Heart right ventricle (tissue), 16 donors: ENCODE measurements at regions of chr4 and their contacts with region 1.

Region 1: GRCh38 chr4:73258686-73259570 is at the start of gene ANKRD17:
- DNase-seq: peak; percentile 90 to 93
- ATAC-seq: peak; percentile 91 to 96 (median 93)
- H3K4me3 ChIP-seq: peak within 1 kb of the TSS; percentile 68 to 96 (median 82)
- H3K27ac ChIP-seq: peak within 1 kb of the TSS; percentile 93 to 100 (median 98)
- H3K4me1 ChIP-seq: peaks cover 0 to 65% (median 50%) of the 10 kb centered on the region in 9 donors
- H3K27me3 ChIP-seq: no peaks in the 10 kb centered on the region
- CTCF ChIP-seq: peak in 5 of 9 donors; percentile 18 to 30 (median 27)
- total RNA-seq, gene ANKRD17: 47.4 to 71.7 (median 63.7) TPM

Region 2: GRCh38 chr4:73055241-73055897 is 203.6 kb before region 1 on chr4:
- intact Hi-C with region 1: loop called in 1 of 10 experiments (anchors 10 kb)
- DNase-seq: no peak
- ATAC-seq: no peak
- H3K4me3 ChIP-seq: no peak overlapping the region
- H3K27ac ChIP-seq: no peak overlapping the region
- H3K4me1 ChIP-seq: peaks cover 0 to 6% (median 0%) of the 10 kb centered on the region in 9 donors
- H3K27me3 ChIP-seq: no peaks in the 10 kb centered on the region
- CTCF ChIP-seq: no peak

Region 3: GRCh38 chr4:73075832-73076231 is 183.1 kb before region 1 on chr4:
- intact Hi-C with region 1: loop called in 2 of 10 experiments (anchors 2 to 5 kb)
- DNase-seq: no peak
- ATAC-seq: no peak
- H3K4me3 ChIP-seq: no peak overlapping the region
- H3K27ac ChIP-seq: no peak overlapping the region
- H3K4me1 ChIP-seq: peaks cover 0 to 7% (median 0%) of the 10 kb centered on the region in 9 donors
- H3K27me3 ChIP-seq: no peaks in the 10 kb centered on the region
- CTCF ChIP-seq: no peak

Region 4: GRCh38 chr4:73127839-73128453 is 131.0 kb before region 1 on chr4:
- intact Hi-C with region 1: loop called in 5 of 10 experiments (anchors 5 to 10 kb)
- DNase-seq: no peak
- ATAC-seq: peak in 4 of 8 donors; percentile 65 to 76 (median 73)
- H3K4me3 ChIP-seq: no peak overlapping the region
- H3K27ac ChIP-seq: no peak overlapping the region
- H3K4me1 ChIP-seq: peaks cover 0 to 5% (median 0%) of the 10 kb centered on the region in 9 donors
- H3K27me3 ChIP-seq: no peaks in the 10 kb centered on the region
- CTCF ChIP-seq: peak in 7 of 9 donors; percentile 20 to 53 (median 37)

Region 5: DNA sequence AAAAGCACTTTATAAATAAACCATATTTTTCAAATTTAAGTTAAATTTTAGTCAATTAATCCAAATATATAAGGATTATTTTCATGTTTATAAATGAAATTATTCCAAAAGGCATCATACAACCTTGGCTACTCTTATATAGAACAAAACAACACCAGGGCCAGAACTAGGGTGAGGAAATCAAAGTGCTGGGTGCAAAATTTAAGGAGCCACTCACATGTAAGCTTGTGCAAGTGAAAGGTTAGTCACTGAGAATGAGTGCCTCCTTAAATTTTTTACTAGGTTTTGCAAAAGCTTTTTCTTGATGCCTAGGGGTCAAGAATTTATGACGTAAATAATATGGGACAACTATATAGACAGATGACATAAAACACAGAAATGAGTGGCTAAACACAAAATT is 106.0 kb before region 1 on chr4:
- intact Hi-C with region 1: loop called in 1 of 10 experiments (anchors 5 kb)
- DNase-seq: no peak
- ATAC-seq: no peak
- H3K4me3 ChIP-seq: no peak overlapping the region
- H3K27ac ChIP-seq: no peak overlapping the region
- H3K4me1 ChIP-seq: no peaks in the 10 kb centered on the region
- H3K27me3 ChIP-seq: no peaks in the 10 kb centered on the region
- CTCF ChIP-seq: no peak

Region 6: DNA sequence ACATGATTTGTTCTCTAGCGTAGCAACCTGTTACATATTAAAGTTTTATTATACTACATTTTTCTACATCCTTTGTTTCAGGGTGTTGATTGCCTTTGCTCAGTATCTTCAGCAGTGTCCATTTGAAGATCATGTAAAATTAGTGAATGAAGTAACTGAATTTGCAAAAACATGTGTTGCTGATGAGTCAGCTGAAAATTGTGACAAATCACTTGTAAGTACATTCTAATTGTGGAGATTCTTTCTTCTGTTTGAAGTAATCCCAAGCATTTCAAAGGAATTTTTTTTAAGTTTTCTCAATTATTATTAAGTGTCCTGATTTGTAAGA is 147.6 kb after region 1 on chr4:
- intact Hi-C with region 1: no loop called
- DNase-seq: no peak
- ATAC-seq: no peak
- H3K4me3 ChIP-seq: no peak overlapping the region
- H3K27ac ChIP-seq: no peak overlapping the region
- H3K4me1 ChIP-seq: no peaks in the 10 kb centered on the region
- H3K27me3 ChIP-seq: peaks cover 0 to under 1% (median 0%) of the 10 kb centered on the region in 7 donors
- CTCF ChIP-seq: no peak